Mammary epithelial cell (primary cell): ENCODE measurements at regions of chr13 and their contacts with region 1.

Region 1: GRCh38 chr13:38866649-38867048 is 124.0 kb downstream of the STOML3 start:
- DNase-seq: peak; percentile 23
- H3K4me3 ChIP-seq: no peak overlapping the region
- H3K27ac ChIP-seq: no peak overlapping the region
- H3K4me1 ChIP-seq: no peaks in the 10 kb centered on the region
- H3K27me3 ChIP-seq: no peaks in the 10 kb centered on the region
- CTCF ChIP-seq: no peak

Region 2: DNA sequence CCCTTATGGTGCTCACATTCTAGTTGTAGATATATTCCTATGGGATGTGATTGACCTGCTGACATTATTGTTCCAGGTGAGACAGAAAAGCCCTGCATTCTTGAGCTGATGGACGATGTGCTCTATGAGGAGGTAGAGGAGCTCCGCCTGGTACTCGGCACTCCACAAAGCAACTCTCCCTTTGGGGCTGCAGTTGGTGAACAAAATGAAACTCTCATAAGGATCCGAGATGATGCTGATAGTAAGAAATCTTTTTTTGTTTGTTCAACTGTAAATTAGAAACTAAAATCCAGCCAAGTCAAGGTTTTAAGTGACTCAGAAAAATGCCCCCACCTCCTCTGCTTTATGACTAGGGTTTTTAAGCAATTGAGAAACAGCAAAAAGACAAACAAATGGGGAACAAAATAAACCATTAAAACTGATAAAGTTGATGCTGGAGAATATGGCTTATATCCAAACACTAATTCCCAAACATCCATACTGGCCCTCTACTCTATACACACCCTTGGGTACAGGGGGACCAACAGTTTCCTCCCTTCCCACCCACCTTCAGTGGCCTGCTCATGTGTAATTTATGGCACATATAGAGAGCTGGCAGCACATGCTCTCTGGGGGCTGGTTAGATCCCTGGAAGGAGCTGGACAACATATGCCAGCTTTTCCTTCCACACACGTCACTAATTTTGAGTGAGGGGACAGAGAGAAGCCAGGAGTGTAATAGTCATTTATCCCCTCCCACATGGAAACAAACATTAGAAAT is 15.6 kb before region 1 on chr13:
- CTCF ChIA-PET with region 1: interaction called, 10 read pairs
- dilution Hi-C with region 1: no loop called
- in situ Hi-C with region 1: no loop called
- intact Hi-C with region 1: no loop called
- DNase-seq: no peak
- H3K4me3 ChIP-seq: no peak overlapping the region
- H3K27ac ChIP-seq: no peak overlapping the region
- H3K4me1 ChIP-seq: peaks cover 13% of the 10 kb centered on the region
- H3K27me3 ChIP-seq: no peaks in the 10 kb centered on the region
- CTCF ChIP-seq: no peak

Region 3: GRCh38 chr13:39016787-39017186 is 150.1 kb after region 1 on chr13:
- CTCF ChIA-PET with region 1: no interaction called
- dilution Hi-C with region 1: no loop called
- in situ Hi-C with region 1: no loop called
- intact Hi-C with region 1: loop called (anchors 1 kb)
- DNase-seq: peak; percentile 37
- H3K4me3 ChIP-seq: no peak overlapping the region
- H3K27ac ChIP-seq: no peak overlapping the region
- H3K4me1 ChIP-seq: no peaks in the 10 kb centered on the region
- H3K27me3 ChIP-seq: no peaks in the 10 kb centered on the region
- CTCF ChIP-seq: peak; percentile 45 to 68